GM10248 (cell line): ENCODE measurements at regions of chr5 and their contacts with region 1.

Region 1: DNA sequence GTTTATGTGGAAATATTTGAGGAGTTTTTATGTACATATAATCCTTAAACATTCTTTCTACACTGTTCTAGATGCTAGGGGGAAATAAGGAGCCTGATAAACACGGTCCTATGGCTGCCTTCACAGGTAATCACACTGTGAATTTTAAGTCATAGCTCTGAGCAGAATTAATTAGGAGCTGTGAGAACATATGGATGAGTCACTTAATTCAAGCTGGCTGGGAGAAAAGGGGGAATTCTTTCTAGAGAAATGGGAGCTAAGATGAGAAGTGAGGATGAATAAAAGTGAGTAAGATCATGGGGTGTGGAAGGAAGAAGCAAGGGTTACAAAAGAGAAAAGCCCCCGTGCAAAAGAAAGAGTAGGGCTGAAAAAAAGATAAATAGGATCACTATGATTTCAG is 290.8 kb downstream of the DNAH5 start:
- DNase-seq: no peak
- CTCF ChIP-seq: no peak

Region 2: DNA sequence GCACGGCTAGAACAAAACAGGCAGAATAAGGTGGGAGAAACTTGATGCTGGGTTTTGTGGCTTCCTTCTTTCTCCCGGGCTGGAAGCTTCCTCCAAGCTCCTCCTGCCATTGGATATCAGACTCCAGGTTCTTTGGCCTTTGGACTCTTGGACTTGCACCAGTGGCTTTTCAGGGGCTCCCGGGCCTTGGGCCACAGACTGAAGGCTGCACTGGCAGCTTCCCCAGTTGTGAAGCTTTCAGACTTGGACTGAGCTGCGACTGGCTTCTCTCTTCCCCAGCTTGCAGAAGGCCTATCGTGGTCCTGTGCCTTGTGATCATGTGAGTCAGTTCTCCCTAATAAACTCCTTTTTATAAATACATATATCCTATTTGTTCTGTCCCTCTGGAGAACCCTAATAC is 73.7 kb before region 1 on chr5:
- CTCF ChIA-PET with region 1: no interaction called
- POLR2A ChIA-PET with region 1: no interaction called
- DNase-seq: no peak
- CTCF ChIP-seq: no peak

Region 3: DNA sequence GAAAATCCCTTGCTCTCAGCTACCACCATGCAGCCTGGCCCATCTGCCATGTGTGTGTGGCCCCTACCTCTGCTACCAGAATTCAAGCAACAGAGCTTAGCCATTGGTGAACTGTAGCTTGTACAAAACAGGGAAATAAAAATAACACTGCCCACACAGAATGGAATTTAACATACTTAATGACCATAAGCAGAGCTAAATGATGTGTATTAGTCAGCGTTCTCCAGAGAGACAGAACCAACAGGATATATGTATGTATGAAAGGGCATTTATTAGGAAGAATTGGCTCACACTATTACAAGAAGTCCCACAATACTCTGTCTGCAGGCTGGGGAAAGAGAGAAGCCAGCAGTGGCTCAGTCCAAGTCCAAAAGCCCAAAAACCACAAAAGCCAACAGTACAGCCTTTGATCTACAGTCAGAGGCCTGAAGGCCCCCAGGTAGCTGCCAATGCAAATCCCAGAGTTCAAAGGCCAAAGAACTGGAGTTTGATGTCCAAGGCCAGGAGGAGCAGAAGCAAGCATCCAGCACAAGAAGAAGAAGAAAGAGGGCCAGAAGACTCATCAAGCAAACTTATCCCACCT is 28.0 kb before region 1 on chr5:
- CTCF ChIA-PET with region 1: no interaction called
- POLR2A ChIA-PET with region 1: no interaction called
- DNase-seq: no peak
- CTCF ChIP-seq: no peak

Region 4: DNA sequence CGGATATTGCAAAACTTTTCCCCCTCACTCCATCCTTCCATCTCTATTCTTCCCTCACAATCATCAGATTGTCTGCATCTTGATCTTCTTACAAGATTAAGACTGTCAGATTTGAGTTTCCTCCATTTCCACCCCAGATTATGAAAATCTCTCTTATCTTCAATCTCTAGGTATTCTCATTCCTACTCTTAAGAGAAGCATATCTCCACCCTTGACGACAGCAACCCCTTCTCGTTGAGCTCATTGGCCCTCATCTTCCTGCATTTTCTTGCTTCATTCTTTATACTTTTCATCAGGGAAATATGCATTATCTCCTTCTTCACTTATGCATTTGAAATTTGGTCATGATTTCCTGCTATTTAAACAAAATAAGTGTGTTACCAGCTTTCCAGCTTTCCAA is 10.5 kb before region 1 on chr5:
- CTCF ChIA-PET with region 1: interaction called, 10 read pairs
- POLR2A ChIA-PET with region 1: no interaction called
- DNase-seq: no peak
- CTCF ChIP-seq: no peak